ENCODE measurements at regions of chr13 and their contacts with region 1.

Region 1: DNA sequence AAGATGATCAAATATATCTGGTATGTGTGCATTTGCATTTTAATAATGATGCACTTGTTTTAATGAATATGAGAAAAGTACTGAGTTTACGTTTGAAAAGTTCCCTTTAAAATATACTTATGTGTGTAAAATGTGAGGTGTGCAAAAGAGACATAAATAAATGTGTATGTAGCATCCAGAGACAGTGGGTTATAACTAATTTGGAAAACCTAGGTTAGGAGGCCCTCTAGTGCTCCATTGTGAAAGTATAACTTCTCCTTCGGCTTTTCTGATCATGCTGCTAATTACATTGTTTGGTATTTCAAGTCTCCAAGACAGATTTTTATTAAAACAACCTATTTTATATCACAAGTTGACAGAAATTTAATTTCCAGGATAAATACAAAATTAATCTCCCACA is 30.1 kb downstream of the SCEL start:
- DNase-seq: no peak
- ATAC-seq: peak in 3 of 4 donors; percentile 45 to 65 (median 46)
- H3K4me3 ChIP-seq: no peak overlapping the region
- H3K27ac ChIP-seq: no peak overlapping the region
- H3K4me1 ChIP-seq: no peaks in the 10 kb centered on the region
- H3K27me3 ChIP-seq: no peaks in the 10 kb centered on the region
- CTCF ChIP-seq: peak in 1 of 4 donors; percentile 20

Region 2: DNA sequence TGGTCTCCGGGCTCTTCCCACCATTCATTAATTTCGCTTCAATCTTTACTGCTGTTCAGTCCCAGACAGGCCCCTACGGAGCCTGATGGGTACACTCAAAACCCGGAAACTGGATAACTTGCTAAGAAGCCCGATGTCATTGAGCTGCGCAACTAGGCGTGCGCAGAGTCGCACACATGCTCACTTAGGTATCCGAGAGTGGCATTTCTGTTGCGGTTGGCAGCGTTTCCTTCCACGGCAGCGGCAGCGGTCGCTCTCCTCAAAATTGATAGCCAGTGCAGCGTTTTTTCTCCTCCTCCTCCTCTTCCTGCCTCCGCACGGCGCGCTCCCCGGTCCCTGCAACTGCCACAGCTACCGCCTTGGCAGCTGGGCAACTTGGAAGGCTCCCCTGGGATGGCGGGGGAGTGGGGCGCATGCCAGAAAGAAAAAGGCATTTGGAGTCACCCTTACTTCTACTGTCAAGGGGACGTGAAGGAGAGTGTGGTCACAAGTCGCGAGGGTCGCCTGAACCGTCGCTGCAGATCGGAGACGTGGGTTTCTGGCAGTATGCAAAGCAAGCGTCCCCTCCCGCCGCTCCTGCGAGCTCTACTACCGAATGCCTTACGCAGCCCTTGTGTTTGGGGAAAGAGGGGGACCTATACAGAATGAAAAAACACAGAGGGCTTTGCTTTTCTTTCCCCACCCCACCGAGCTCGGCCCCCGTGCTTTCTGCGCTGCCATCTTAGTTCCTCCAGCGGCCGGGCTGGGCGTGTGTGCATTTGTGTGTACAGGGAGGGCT is 236.3 kb before region 1 on chr13:
- intact Hi-C with region 1: no loop called
- DNase-seq: peak; percentile 78 to 88 (median 85)
- ATAC-seq: peak; percentile 67 to 86 (median 78)
- H3K4me3 ChIP-seq: peak overlapping the region; percentile 45 to 88 (median 80)
- H3K27ac ChIP-seq: peak overlapping the region; percentile 64 to 89 (median 81)
- H3K4me1 ChIP-seq: peaks cover 0 to 23% (median 5%) of the 10 kb centered on the region in 3 donors
- H3K27me3 ChIP-seq: no peaks in the 10 kb centered on the region
- CTCF ChIP-seq: no peak

Region 3: DNA sequence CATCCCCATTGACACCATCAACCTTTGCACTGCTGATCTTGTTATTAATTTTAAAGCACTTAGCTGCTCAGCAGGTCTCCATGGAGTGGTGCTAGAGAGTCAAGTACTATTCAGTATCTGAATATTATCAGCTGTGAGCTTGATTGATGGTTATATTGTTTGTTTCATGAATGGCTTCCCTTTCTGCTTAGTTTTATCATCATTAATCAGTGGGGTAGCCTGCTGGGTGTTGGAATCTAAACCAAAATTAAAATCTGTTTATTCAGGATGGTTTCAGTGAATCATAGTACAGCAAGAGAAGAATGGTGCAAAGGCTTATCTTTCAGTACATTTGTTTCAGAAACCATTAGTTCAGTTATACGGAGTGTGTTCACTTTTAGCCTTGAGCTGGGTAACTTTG is 72.7 kb before region 1 on chr13:
- intact Hi-C with region 1: loop called in 1 of 3 experiments (anchors 10 kb)
- DNase-seq: no peak
- ATAC-seq: peak in 3 of 4 donors; percentile 75 to 82 (median 78)
- H3K4me3 ChIP-seq: no peak overlapping the region
- H3K27ac ChIP-seq: no peak overlapping the region
- H3K4me1 ChIP-seq: no peaks in the 10 kb centered on the region
- H3K27me3 ChIP-seq: no peaks in the 10 kb centered on the region
- CTCF ChIP-seq: peak in 2 of 4 donors; percentile 17 to 21

Measured in pancreas (tissue), 10 donors.